ENCODE measurements at regions of chr2 and their contacts with region 1.

Region 1: GRCh38 chr2:40062381-40062780 is 283.3 kb upstream of the THUMPD2 start:
- DNase-seq: no peak
- H3K4me3 ChIP-seq: no peak overlapping the region
- H3K27ac ChIP-seq: no peak overlapping the region
- H3K4me1 ChIP-seq: peaks cover 5% of the 10 kb centered on the region
- CTCF ChIP-seq: no peak

Region 2: GRCh38 chr2:39855871-39856270 is 206.5 kb before region 1 on chr2:
- CTCF ChIA-PET with region 1: no interaction called
- POLR2A ChIA-PET with region 1: no interaction called
- intact Hi-C with region 1: no loop called
- DNase-seq: no peak
- H3K4me3 ChIP-seq: no peak overlapping the region
- H3K27ac ChIP-seq: no peak overlapping the region
- H3K4me1 ChIP-seq: peaks cover 39% of the 10 kb centered on the region
- CTCF ChIP-seq: no peak

Region 3: DNA sequence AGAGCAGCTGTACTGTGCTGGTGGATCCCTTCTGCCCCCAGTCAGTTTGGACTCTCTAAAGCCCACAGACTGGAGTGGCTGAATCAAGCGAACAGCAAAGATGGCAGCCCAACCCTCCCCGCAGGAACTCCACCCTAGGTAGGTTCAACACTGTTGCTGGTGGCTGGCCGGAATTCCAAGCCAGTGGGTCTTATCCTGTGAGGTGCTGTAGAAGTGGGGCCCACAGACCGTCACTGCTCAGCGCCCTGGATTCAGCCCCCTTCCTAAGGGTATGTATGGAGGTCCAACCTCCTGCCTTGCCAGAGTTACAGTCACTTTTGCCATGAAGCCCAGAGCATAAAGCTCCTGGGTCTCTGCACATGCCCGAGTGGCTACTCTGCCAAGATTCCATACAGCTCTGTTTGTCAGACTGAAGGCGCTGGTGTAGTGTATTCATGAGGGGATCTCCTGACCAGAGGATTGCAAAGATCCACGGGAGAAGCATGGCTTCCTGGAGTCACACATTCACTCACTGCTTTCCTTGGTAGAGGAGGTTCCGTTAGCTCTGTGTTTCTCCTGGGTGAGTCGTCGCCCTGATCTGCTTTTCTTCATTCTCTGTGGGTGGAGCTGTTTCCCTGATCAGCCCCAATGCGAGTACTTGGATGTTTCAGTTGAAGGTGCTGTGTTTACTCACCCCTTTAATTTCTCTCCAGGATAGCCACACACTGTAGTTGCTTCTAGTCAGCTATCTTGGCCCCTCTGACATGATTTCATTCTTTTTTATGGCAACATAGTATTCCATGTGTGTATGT is 10.3 kb after region 1 on chr2:
- CTCF ChIA-PET with region 1: no interaction called
- POLR2A ChIA-PET with region 1: interaction called, 15 read pairs
- intact Hi-C with region 1: no loop called
- DNase-seq: no peak
- H3K4me3 ChIP-seq: no peak overlapping the region
- H3K27ac ChIP-seq: no peak overlapping the region
- H3K4me1 ChIP-seq: peaks cover 4% of the 10 kb centered on the region
- CTCF ChIP-seq: no peak

Measured in OCI-LY7 (cell line).